BJ (cell line): ENCODE measurements at regions of chr14 and their contacts with region 1.

Region 1: DNA sequence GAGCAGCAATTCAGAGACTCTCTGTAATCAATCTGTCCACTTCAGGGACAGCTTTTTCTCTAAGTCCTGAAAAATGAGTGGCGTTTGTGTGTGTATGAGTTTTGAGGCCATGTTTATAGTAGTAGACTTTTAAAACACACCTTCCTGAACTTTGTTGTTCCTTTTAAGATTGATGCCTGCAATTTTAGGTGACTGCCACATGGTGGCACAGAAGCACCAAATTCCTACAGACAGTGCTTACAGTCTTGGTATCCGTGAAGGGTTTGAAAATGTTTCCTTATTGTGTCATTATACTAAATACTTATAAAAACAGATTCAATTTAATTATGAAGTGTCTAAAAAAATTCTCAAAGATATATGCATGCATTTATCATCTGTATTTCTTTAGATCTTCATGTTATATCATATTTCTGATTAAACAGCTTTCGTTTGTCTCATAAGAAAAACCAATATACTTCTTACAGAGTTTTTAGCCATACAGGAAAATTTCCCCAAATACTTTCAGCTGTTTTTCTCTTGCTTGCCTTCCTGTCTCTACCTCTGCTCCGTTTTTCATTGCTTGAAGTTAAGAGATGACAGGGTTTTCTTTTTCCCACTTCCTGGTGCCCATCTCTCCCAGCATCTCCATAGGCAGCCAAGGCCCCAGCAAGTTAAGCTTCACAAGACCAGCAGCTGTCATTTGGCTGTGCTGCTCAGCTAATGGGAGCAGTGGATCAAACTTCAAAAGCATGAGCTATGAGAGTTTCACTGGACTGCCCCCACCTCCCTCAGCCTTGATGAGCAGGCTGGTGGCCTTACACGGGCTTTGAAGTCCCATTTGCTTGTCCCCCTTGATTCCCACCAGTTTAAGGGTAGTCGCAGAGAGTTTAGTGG is 259.6 kb downstream of the AKAP6 start:
- DNase-seq: no peak
- H3K4me3 ChIP-seq: no peak overlapping the region
- H3K27me3 ChIP-seq: no peaks in the 10 kb centered on the region; the same call in 1 of the 2 replicates
- CTCF ChIP-seq: peak; percentile 68

Region 2: DNA sequence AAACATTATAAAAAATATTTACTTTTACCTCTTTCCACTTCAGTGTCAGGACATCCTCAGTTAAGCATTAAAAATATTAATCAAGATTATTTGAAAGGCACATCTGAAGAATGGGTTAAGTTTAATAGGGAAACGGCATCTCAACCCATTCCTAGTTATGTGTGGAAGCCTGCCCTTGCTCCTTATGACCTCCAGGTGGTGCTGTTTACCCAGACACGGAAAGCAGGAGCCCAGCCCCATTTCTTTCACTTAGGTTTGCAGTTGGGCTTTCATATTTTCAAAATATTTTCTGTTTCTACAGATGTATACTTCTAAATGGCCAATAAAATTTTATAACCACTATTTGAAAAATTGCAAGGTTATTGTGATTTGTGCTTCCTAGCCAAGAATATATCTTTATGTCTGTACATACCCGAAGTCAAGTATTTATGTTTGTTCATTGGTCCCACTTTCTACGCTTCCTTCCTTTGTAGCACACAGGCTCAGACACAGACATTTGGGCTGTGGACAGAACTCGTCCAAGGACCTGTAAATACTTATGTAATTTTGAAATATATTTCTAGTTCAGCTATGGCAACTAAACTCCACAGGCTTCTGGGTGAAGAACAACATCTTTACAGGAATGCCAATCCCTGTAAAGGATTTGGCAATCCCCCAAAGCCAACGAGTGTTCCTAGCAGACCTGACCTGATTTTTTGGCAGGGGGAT is 12.4 kb before region 1 on chr14:
- CTCF ChIA-PET with region 1: interaction called, 22 read pairs
- POLR2A ChIA-PET with region 1: no interaction called
- DNase-seq: no peak
- H3K4me3 ChIP-seq: no peak overlapping the region
- H3K27me3 ChIP-seq: no peaks in the 10 kb centered on the region
- CTCF ChIP-seq: peak; percentile 94